ENCODE measurements at regions of chr19 and their contacts with region 1.

Region 1: GRCh38 chr19:54448774-54449700 is at the start of gene LENG8:
- DNase-seq: peak; percentile 98
- H3K4me3 ChIP-seq: peak within 1 kb of the TSS; percentile 98
- H3K27ac ChIP-seq: peak within 1 kb of the TSS; percentile 72
- H3K4me1 ChIP-seq: peaks cover 26% of the 10 kb centered on the region
- CTCF ChIP-seq: no peak
- total RNA-seq, gene LENG8: 55.7 and 63.2 TPM in 2 replicates

Region 2: DNA sequence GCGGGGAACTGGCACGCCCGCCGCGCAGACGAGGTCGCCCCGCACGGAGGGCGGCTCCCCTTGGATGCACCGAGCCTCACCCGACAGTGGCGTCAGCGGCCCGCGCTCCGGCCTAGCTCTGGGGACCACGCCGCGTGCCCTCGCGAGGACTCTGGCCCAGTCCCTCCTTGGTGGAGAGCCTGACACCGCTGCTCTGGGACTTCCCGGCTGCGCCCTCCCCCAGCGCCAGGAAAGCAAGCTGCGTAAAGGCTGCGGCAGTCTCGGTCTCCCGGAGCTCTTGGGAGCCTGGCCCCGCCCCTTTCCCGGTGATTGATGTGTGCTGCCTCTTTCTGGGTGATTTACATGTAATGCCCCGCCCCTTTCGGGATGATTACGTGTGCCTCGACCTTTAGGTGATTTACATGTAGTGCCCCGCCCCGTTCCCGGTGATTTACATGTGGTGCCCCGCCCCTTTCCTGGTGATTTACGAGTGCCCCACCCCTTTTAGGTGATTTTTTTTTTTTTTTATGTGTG is 14.6 kb after region 1 on chr19 and contains the start of gene LENG9:
- CTCF ChIA-PET with region 1: no interaction called
- POLR2A ChIA-PET with region 1: no interaction called
- intact Hi-C with region 1: loop called (anchors 1 kb)
- DNase-seq: peak; percentile 99
- H3K4me3 ChIP-seq: peak within 1 kb of the TSS; percentile 76
- H3K27ac ChIP-seq: peak within 1 kb of the TSS; percentile 92
- H3K4me1 ChIP-seq: peaks cover 20% of the 10 kb centered on the region
- CTCF ChIP-seq: no peak
- total RNA-seq, gene LENG9: 4.1 and 6.0 TPM in 2 replicates

Region 3: GRCh38 chr19:54477650-54478049 is 28.6 kb after region 1 on chr19:
- CTCF ChIA-PET with region 1: no interaction called
- POLR2A ChIA-PET with region 1: no interaction called
- intact Hi-C with region 1: no loop called
- DNase-seq: no peak
- H3K4me3 ChIP-seq: no peak overlapping the region
- H3K27ac ChIP-seq: no peak overlapping the region
- H3K4me1 ChIP-seq: no peaks in the 10 kb centered on the region
- CTCF ChIP-seq: 0 out of 2 replicates have a peak, but pooled peaks have one; percentile 29